ENCODE measurements at regions of chr1 and their contacts with region 1.

Region 1: DNA sequence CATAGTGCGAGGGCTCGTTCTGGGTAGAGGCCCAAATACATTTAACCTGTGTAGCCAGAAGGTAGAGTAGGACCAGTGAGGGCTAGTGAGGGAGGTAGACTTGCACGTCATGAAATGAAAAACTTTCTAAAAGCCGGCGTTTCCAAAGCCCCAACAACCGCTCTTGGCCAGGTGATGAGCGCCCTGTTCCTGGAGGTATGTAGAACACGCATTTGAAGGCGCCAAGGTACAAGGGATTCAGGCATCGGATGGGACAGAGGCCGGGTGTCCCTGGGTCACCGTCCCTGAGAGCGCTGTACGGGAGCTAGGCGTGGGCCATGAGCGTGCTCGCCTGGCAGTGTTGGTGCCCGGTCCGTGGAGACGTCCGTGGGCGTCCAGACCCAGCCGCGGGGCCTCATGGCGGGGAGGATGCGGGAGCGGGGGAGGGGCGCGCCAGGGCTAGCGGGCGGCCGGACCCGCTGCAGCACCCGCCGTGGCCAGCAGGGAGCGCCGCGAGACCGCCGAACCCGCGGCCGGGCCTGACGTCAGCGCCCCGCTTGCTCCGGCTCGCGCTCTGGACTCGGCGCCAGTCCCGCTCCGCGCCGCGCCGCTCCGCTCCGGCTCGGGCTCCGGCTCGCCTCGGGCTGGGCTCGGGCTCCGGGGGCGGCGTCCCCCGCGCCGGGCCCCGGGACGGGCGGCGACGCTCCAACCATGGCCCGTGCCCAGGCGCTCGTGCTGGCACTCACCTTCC is at the start of gene PTPRU:
- DNase-seq: peak; percentile 93
- total RNA-seq, gene PTPRU: 6.6 TPM

Region 2: GRCh38 chr1:29077155-29077554 is 159.0 kb before region 1 on chr1:
- intact Hi-C with region 1: no loop called
- DNase-seq: no peak

Region 3: DNA sequence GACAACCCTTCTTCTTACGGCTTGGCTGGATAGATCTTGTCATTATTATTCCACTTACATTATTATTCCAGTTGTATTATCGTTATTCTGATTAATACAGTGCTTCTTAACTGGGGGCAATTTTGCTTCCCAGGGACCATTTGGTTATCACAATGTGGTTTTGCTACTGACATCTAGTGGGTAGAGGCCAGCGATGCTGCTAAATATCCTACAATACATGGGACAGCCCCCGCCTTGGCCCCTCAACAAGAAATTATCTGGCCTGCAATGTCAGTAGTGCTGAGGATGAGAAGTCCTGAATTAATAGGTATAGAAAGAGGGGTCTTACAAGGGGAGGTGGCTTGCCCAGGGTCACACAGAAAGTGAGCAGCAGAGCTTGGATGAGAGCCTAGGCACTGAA is 105.8 kb after region 1 on chr1:
- intact Hi-C with region 1: loop called (anchors 5 kb)
- DNase-seq: no peak

Region 4: GRCh38 chr1:29542548-29542947 is 306.4 kb after region 1 on chr1:
- intact Hi-C with region 1: no loop called
- DNase-seq: no peak

Region 5: GRCh38 chr1:30085811-30086770 is 850.0 kb after region 1 on chr1:
- intact Hi-C with region 1: loop called (anchors 5 kb)
- DNase-seq: no peak

Region 6: DNA sequence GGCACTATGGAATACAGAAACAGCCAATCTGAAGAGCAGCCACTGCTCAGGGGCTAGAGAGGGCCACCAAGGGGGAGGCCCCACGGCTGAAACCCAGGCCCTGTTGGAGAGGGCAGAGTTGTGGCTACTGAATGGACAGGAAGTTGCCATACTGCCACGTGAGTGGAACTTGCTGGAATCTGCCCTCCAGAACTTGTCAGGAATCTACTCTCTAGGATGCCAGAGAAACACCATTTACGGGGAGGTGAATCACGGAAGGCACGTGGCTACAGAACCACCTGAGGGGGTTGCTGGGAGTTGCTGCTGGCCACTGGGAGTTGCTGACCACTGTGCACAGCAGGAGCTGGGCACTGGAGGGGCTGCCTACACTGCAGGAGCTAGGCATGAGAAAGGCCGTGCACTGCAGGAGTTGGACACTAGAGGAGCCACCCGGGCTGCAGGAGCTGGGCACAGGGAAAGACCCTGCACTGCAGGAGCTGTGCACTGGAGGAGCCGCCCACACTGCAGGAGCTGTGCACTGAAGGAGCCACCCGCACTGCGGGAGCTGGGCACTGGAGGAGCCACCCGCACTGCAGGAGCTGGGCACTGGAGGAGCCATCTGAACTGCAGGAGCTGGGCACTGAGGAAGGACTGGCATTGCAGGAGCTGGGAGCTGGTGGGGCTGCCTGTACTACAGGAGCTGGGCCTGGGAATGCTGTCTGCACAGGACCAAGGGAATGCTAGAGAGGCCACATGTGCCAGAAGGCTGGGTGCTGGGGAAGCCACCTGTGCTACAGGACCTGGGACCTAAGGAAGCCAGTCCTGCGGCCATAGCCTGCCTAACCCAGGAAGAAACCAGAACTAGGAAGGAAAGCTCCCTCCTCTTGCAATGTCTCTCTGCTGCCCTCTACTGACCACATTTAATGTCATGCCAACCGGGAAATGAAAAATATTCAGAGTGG is 1143.8 kb after region 1 on chr1:
- intact Hi-C with region 1: loop called (anchors 5 kb)
- DNase-seq: peak; percentile 70

Region 7: DNA sequence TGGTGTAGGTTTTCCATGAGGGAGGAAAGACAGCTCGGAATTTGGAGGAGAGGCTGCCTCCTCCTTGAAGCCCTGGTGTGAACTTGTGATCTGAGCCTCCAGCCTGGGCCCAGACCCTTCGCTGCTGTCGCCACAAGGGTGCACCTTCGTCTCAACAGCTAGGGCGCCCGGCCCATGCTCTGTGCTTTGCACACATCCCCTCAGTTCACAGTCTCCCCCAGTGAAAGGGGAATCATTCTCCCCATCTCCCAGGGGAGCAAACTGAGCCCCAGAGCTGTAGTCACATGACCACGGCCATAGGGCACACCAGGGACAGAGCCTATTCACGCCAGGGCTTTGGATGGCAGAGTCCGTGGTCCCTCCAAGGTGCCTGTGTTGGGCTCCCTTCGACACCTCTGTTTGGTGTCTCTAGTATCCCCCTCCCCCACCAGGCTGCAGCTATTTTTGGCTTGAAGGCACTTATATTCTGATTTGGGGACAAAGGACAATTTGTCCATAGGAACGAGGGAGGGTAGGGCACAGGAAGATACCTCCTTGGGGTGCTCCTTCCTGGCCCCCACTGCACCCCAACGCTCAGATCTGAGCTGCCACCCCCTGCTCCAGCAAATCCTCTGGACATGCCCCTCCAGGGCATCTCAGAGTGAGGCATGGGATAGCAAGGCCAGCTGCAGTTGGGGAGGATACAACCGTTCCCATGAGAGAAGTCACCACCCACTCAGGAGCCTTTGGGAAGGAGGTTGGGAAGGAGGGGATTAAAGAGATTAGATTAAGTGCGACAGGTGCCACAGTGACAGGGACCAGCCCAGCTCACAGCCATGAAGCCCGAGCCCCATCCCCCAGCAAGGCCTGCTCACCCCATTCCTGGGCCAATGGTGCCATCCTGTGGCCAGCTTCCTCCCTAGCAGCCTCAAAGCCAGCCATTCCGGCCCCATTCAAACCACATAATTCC is 1471.6 kb after region 1 on chr1:
- intact Hi-C with region 1: loop called (anchors 2 kb)
- DNase-seq: peak; percentile 86